PC-3 (cell line): ENCODE measurements at regions of chr2 and their contacts with region 1.

Region 1: GRCh38 chr2:88451811-88452565 is 505 bp downstream of the FOXI3 start:
- DNase-seq: no peak
- ATAC-seq: no peak
- H3K4me3 ChIP-seq: no peak overlapping the region
- H3K27ac ChIP-seq: no peak overlapping the region
- H3K4me1 ChIP-seq: no peaks in the 10 kb centered on the region
- H3K27me3 ChIP-seq: peaks cover 58% of the 10 kb centered on the region
- CTCF ChIP-seq: no peak

Region 2: GRCh38 chr2:88190808-88191721 is 260.9 kb before region 1 on chr2:
- CTCF ChIA-PET with region 1: no interaction called
- POLR2A ChIA-PET with region 1: no interaction called
- intact Hi-C with region 1: loop called (anchors 5 kb)
- DNase-seq: peak; percentile 52
- ATAC-seq: peak; percentile 23; the same call in 1 of the 2 replicates
- H3K4me3 ChIP-seq: no peak overlapping the region
- H3K27ac ChIP-seq: no peak overlapping the region
- H3K4me1 ChIP-seq: no peaks in the 10 kb centered on the region
- H3K27me3 ChIP-seq: 0 out of 2 replicates have a peak, but pooled peaks cover 9% of the 10 kb centered on the region
- CTCF ChIP-seq: peak; percentile 64

Region 3: DNA sequence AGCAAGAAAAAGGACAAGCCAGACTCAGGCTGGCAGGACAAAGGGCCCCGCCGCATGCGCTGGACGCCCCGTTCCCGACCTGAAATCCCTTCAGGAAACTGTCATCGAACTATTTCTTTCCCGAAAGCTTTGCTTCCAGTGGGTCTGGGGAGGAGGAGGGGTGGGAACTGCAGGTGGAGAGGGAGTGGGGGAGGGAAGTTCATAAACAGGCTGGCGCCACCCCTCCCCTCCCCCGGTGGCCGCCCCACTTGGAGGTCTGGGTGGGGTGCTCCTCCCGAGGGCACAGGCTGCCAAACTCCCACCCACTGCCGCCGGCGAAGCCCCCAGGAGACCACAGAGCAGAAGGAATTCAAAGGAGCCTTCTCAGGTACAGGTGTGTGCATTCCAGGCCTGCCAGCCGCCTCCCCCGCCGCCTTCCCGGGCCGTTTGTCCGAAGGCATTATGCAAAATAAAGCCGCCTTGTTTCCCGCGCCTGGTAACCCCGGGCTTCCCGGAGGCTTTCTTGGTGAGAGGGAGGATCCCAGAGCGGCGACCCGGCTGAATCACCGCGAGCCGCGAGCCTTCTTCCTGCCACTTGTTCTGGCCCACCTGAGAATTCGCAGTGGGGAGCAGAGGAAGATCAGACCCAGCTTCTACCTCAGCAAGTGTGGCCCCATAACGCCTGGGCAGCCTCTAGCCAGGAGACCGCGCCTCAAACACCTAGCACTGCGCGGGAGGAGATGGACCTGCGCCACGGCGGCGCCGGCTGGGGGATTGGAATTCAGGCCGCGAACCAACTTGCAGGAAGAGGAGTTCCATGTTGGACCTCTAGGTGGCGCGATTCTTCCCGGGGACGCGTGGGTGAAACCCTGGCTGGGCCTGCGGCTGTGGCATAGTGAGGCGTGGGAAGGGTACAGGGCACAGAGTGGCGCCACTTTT is 101.4 kb before region 1 on chr2:
- CTCF ChIA-PET with region 1: no interaction called
- POLR2A ChIA-PET with region 1: no interaction called
- intact Hi-C with region 1: no loop called
- DNase-seq: peak; percentile 31
- ATAC-seq: no peak
- H3K4me3 ChIP-seq: no peak overlapping the region
- H3K27ac ChIP-seq: no peak overlapping the region
- H3K4me1 ChIP-seq: no peaks in the 10 kb centered on the region
- H3K27me3 ChIP-seq: peaks cover 37% of the 10 kb centered on the region
- CTCF ChIP-seq: peak; percentile 66

Region 4: GRCh38 chr2:88464153-88464552 is 12.2 kb after region 1 on chr2:
- CTCF ChIA-PET with region 1: no interaction called
- POLR2A ChIA-PET with region 1: no interaction called
- intact Hi-C with region 1: no loop called
- DNase-seq: no peak
- ATAC-seq: no peak
- H3K4me3 ChIP-seq: no peak overlapping the region
- H3K27ac ChIP-seq: no peak overlapping the region
- H3K4me1 ChIP-seq: no peaks in the 10 kb centered on the region
- H3K27me3 ChIP-seq: peaks cover 19% of the 10 kb centered on the region
- CTCF ChIP-seq: no peak